ENCODE measurements at regions of chr21 and their contacts with region 1.

Region 1: DNA sequence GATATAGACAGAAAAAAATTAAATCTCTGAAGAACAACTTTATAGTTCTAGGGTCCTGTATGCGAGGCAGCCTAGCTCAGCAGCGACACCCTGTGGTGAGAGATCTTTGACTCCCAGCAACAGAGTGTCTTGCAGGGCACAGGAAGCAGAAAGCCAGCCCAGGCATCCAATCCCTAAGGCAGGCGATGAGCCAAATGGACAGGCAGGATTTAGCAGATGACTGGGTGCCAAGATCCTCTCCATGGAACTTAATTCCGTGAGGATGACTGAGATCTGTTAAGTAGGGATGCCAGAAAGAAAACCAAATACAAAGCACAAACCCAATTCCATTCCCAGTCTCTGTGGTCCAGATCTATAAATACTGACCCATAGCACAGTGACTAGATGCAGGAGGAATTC is 38.8 kb downstream of the HLCS start:
- DNase-seq: peak; percentile 82
- ATAC-seq: peak; percentile 85

Region 2: DNA sequence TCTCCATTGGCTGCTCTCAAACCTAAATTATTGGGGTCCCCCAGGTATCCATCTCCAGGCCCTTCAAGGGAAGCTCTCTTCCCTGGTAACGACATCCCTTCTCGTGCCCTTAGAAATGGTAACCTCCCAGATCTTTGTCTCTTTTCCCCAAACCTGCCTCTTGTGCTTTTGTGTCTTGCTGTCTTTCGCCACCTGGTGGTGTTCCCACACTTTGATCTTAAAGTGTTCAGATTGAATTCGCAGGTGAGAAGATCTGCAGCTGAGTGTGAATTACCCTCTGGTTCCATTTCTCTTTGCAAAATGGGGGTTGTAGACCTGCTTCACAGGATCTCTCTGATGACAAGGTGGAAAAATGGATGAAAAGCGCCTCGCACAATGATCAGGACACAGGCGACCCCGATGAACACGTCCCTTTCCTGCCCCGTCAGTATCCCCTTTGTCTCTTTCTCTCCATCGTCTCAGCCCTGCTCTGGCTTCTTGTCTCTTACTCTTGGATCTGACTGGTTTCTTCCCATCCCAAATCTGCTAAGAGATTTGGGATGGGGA is 718.0 kb before region 1 on chr21:
- intact Hi-C with region 1: no loop called
- DNase-seq: no peak
- ATAC-seq: no peak

Region 3: DNA sequence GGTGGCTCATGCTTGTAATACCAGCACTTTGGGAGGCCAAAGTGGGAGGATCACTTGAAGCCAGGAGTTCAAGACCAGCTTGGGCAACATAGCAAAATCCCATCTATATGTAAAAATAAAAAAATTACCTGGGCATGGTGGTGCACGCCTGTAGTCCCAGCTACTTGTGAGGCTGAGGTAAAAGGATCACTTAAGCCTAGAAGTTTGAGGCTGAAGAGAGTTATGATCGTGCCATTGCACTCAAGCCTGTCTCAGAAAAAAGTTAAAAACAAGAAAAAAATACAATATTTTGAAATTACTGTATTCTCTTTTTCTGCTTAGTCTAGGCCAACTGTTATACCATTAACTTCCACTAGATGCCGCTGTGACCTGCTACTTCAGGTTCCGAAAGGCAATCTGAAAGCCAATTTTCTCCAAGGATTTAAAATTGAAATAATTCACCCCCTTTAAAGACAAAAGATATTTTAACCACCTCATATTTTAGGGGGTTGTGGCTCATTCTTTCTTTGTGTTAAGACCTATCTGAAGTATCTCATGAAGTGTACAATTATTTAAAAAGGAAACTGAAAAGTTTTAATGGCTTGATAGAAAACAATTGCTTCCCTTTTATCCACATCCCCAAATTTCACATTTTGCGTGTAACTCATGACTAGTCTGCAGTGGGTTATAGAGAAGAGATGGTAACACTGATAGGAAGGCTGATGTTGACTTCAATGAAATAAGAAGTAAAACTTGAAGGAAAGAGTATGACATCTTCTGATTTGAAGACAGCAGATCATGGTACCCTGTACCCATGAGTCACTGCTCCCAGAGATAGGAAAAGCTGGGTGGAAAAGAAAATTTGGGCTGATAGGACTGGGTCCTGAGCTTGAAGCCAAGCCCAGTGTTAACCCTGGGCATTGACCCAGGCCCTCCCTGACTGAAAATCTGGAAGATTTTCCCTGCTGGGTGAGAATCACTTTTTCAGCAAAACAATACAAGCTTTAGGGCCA is 423.4 kb before region 1 on chr21:
- intact Hi-C with region 1: loop called (anchors 10 kb)
- DNase-seq: no peak
- ATAC-seq: no peak

Region 4: GRCh38 chr21:36661511-36662309 is 266.0 kb before region 1 on chr21:
- intact Hi-C with region 1: loop called (anchors 5 kb)
- DNase-seq: peak; percentile 37
- ATAC-seq: peak; percentile 42

Region 5: DNA sequence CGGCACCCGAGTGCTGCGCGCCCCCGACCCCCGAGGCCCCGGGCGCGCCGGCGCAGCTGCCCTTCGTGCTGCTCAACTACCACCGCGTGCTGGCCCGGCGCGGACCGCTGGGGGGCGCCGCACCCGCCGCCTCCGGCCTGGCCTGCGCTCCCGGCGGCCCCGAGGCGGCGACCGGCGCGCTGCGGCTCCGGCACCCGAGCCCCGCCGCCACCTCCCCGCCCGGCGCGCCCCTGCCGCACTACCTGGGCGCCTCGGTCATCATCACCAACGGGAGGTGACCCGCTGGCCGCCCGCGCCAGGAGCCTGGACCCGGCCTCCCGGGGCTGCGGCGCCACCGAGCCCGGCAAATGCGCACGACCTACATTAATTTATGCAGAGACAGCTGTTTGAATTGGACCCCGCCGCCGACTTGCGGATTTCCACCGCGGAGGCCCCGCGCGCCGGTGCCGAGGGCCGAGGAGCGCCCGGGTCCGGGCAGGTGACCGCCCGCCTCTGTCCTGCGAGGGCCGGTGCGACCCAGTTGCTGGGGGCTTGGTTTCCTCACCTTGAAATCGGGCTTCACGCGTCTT is 179.8 kb before region 1 on chr21:
- intact Hi-C with region 1: loop called (anchors 10 kb)
- DNase-seq: peak; percentile 77
- ATAC-seq: peak; percentile 79

Region 6: GRCh38 chr21:37119421-37120218 is 191.9 kb after region 1 on chr21:
- intact Hi-C with region 1: no loop called
- DNase-seq: no peak
- ATAC-seq: no peak

Measured in left ventricle myocardium superior (tissue), 1 donor.